ENCODE measurements at regions of chr12 and their contacts with region 1.

Region 1: DNA sequence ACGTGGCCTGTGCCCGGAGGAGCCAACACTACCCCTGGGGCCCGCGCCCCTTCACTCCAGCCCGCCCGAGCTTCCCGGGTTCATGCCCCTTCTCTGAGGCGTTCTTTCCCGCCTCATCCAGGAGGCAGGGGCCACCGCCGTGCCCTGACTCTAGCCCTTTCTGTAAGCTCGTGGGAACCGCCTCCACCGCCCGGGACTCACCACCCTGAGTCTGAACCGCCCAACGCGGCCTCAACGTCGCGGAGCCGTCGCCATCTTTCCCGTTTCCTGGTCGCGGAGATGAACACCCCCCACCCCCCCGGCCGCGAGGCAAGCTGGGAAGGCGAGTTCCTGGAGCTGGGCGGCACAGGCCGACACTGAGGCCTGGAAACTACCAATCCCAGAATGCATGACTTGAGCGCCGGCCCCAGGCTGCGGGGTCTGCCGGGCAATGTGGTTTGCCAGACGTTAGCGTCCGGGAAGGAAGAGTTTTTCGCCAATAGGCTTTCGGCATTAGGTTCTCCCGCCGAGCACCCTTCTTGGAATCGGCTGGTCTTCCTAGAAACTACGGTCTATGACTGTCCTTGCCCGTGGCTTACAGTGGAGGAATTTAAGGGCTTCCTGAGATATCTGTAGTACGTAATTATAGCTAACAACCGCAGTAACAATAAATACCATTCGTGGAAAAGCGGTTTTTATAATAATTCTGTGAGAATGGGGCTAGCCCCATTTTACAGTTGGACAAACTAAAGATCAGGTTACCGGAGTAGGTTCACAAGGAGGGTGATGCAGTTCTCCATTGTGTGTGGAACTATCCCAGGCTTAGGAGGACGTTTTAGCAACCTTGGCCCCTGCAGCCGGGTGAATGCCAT is at the start of gene DDX23:
- DNase-seq: peak; percentile 87 to 94 (median 89)
- H3K4me3 ChIP-seq: peak within 1 kb of the TSS; percentile 87
- H3K4me3 Mint-ChIP-seq: peak within 1 kb of the TSS; percentile 89 to 99 (median 97)
- H3K27ac ChIP-seq: peak within 1 kb of the TSS; percentile 98
- H3K27ac Mint-ChIP-seq: peak within 1 kb of the TSS; percentile 91 to 99 (median 96)
- H3K4me1 ChIP-seq: peaks cover 27% of the 10 kb centered on the region
- H3K4me1 Mint-ChIP-seq: peaks cover 34 to 46% (median 45%) of the 10 kb centered on the region in 3 donors
- H3K27me3 ChIP-seq: no peaks in the 10 kb centered on the region
- H3K27me3 Mint-ChIP-seq: peaks cover 0 to 4% of the 10 kb centered on the region in 2 donors
- total RNA-seq, gene DDX23: 147 to 148 TPM

Region 2: DNA sequence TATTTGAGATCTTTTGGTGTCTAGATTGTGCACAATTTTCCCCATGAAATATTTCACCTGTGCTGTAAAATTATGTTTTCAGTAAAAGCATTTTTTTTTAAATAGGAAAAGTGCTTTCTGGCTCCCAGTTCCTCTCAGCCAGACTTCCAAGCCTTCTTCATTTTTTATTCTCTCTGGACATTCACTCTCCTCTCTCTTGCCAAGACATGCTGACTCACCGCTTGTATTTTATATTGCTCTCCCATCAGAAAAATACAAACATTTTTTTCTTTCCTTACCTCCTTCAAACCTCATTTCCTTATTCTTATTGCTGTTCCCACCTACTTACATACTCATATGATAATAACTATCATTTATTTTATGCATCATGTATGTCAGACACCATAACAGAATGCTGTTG is 463.7 kb before region 1 on chr12:
- CTCF ChIA-PET with region 1: no interaction called
- POLR2A ChIA-PET with region 1: no interaction called
- DNase-seq: no peak
- H3K4me3 ChIP-seq: no peak overlapping the region
- H3K4me3 Mint-ChIP-seq: no peak overlapping the region
- H3K27ac ChIP-seq: no peak overlapping the region
- H3K27ac Mint-ChIP-seq: peak overlapping the region in 1 of 8 donors; percentile 1
- H3K4me1 ChIP-seq: no peaks in the 10 kb centered on the region
- H3K4me1 Mint-ChIP-seq: no peaks in the 10 kb centered on the region
- H3K27me3 ChIP-seq: no peaks in the 10 kb centered on the region
- H3K27me3 Mint-ChIP-seq: peaks cover 27 to 57% of the 10 kb centered on the region in 2 donors

Region 3: DNA sequence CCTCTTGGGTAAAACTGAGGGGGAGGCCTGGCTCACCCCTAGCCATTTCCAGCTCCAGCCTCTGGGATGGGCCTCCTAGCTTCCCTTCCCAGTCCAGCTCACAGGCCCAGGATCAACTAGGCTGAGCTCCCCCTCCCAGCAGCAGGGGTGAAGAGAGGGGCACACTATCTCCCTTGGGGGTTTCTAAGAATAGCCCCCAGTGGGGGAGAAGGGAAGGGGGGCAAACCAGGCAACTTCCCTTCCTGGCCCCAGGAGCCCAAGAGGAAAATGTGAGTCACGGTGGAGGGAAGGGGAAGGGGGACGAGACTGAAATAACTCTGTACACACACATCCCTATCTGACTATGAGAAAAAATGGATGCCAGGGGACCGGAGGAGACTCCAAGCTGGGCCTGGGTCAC is 72.2 kb before region 1 on chr12:
- CTCF ChIA-PET with region 1: no interaction called
- POLR2A ChIA-PET with region 1: no interaction called
- DNase-seq: no peak
- H3K4me3 ChIP-seq: no peak overlapping the region
- H3K4me3 Mint-ChIP-seq: no peak overlapping the region
- H3K27ac ChIP-seq: no peak overlapping the region
- H3K27ac Mint-ChIP-seq: no peak overlapping the region
- H3K4me1 ChIP-seq: no peaks in the 10 kb centered on the region
- H3K4me1 Mint-ChIP-seq: no peaks in the 10 kb centered on the region
- H3K27me3 ChIP-seq: no peaks in the 10 kb centered on the region
- H3K27me3 Mint-ChIP-seq: peaks cover 3 to 21% of the 10 kb centered on the region in 2 donors

Region 4: GRCh38 chr12:48814262-48815125 is 37.6 kb before region 1 on chr12:
- CTCF ChIA-PET with region 1: interaction called, 13 read pairs
- POLR2A ChIA-PET with region 1: interaction called, 5 read pairs
- DNase-seq: peak; percentile 60 to 81 (median 69)
- H3K4me3 ChIP-seq: peak overlapping the region; percentile 84
- H3K4me3 Mint-ChIP-seq: peak overlapping the region; percentile 89 to 98 (median 94)
- H3K27ac ChIP-seq: peak overlapping the region; percentile 67
- H3K27ac Mint-ChIP-seq: peak overlapping the region; percentile 30 to 96 (median 66)
- H3K4me1 ChIP-seq: peaks cover 26% of the 10 kb centered on the region
- H3K4me1 Mint-ChIP-seq: peaks cover 29 to 46% (median 39%) of the 10 kb centered on the region in 3 donors
- H3K27me3 ChIP-seq: no peaks in the 10 kb centered on the region
- H3K27me3 Mint-ChIP-seq: peaks cover 0 to 5% of the 10 kb centered on the region in 2 donors

Region 5: GRCh38 chr12:48890657-48891418 is 38.7 kb after region 1 on chr12:
- CTCF ChIA-PET with region 1: interaction called, 124 read pairs
- POLR2A ChIA-PET with region 1: interaction called, 22 read pairs
- DNase-seq: peak; percentile 57 to 79 (median 64)
- H3K4me3 ChIP-seq: no peak overlapping the region
- H3K4me3 Mint-ChIP-seq: peak overlapping the region in 3 of 7 donors; percentile 18 to 42 (median 39)
- H3K27ac ChIP-seq: no peak overlapping the region
- H3K27ac Mint-ChIP-seq: peak overlapping the region in 2 of 8 donors; percentile 11 to 61
- H3K4me1 ChIP-seq: no peaks in the 10 kb centered on the region
- H3K4me1 Mint-ChIP-seq: peaks cover 6 to 10% (median 8%) of the 10 kb centered on the region in 3 donors
- H3K27me3 ChIP-seq: peaks cover 10% of the 10 kb centered on the region
- H3K27me3 Mint-ChIP-seq: peaks cover 9 to 19% of the 10 kb centered on the region in 2 donors

Region 6: GRCh38 chr12:48917857-48918537 is 65.9 kb after region 1 on chr12:
- CTCF ChIA-PET with region 1: interaction called, 10 read pairs
- POLR2A ChIA-PET with region 1: interaction called, 7 read pairs
- DNase-seq: peak; percentile 16 to 67 (median 47)
- H3K4me3 ChIP-seq: peak overlapping the region; percentile 65
- H3K4me3 Mint-ChIP-seq: peak overlapping the region; percentile 85 to 98 (median 93)
- H3K27ac ChIP-seq: peak overlapping the region; percentile 3
- H3K27ac Mint-ChIP-seq: peak overlapping the region; percentile 91 to 97 (median 94)
- H3K4me1 ChIP-seq: peaks cover 31% of the 10 kb centered on the region
- H3K4me1 Mint-ChIP-seq: peaks cover 41 to 53% (median 46%) of the 10 kb centered on the region in 3 donors
- H3K27me3 ChIP-seq: no peaks in the 10 kb centered on the region
- H3K27me3 Mint-ChIP-seq: no peaks in the 10 kb centered on the region

Region 7: DNA sequence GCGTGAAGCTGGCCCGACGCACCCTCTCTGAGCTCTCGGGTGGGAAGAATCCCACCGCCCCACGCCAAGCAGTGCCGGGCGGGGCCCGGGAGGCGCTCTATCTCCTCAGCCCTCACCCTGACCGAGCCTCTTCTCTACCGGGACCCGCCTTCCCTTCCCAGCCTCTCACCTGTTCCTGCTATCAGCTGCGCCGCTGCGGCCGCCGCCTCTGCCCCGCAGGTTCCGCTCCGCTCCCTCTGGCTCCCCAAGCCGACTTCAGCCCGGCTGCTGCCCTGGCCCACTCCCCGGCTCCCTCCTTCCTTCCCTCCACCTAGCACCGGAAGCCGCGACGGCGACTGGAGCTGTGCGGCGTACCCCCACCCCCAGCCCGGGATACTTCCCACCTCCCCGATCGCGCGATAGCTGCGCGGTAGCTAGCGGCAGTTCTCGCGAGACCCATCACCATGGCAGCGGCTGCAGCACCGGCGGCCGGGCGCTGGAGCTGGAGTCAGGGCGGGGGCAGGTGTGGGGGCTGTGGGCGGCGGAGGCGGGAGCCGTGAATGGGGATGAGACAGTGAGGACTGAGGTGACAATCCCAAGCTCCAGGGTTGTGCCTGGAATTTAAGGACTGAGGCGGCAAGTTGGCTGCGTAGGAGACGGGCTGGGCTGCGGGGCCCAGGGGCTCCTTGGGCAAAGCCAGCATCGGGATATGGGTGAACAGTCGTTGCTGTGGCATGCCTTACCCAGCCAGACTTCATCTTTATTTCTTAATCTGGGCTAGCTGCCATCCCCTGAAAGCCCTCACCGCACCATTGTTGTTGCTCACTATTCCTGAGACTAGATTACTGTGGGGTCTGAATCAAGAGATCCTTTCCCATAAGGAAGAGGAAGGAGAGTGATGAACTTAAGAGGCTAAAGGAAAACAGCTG is 105.3 kb after region 1 on chr12 and contains the start of gene ARF3:
- CTCF ChIA-PET with region 1: interaction called, 10 read pairs
- POLR2A ChIA-PET with region 1: interaction called, 10 read pairs
- DNase-seq: peak; percentile 90 to 96 (median 92)
- H3K4me3 ChIP-seq: peak within 1 kb of the TSS; percentile 83
- H3K4me3 Mint-ChIP-seq: peak within 1 kb of the TSS; percentile 93 to 99 (median 96)
- H3K27ac ChIP-seq: peak within 1 kb of the TSS; percentile 84
- H3K27ac Mint-ChIP-seq: peak within 1 kb of the TSS; percentile 68 to 97 (median 93)
- H3K4me1 ChIP-seq: peaks cover 33% of the 10 kb centered on the region
- H3K4me1 Mint-ChIP-seq: peaks cover 35 to 54% (median 44%) of the 10 kb centered on the region in 3 donors
- H3K27me3 ChIP-seq: no peaks in the 10 kb centered on the region
- H3K27me3 Mint-ChIP-seq: peaks cover 0 to 6% of the 10 kb centered on the region in 2 donors
- total RNA-seq, gene ARF3: 91.5 to 91.8 TPM

Region 8: GRCh38 chr12:48995061-48995879 is 143.2 kb after region 1 on chr12:
- CTCF ChIA-PET with region 1: interaction called, 18 read pairs
- POLR2A ChIA-PET with region 1: no interaction called
- DNase-seq: peak in 4 of 5 donors; percentile 27 to 68 (median 38)
- H3K4me3 ChIP-seq: no peak overlapping the region
- H3K4me3 Mint-ChIP-seq: peak overlapping the region; percentile 12 to 66 (median 45)
- H3K27ac ChIP-seq: no peak overlapping the region
- H3K27ac Mint-ChIP-seq: peak overlapping the region in 7 of 8 donors; percentile 43 to 97 (median 92)
- H3K4me1 ChIP-seq: peaks cover 33% of the 10 kb centered on the region
- H3K4me1 Mint-ChIP-seq: peaks cover 27 to 46% (median 31%) of the 10 kb centered on the region in 3 donors
- H3K27me3 ChIP-seq: peaks cover 26% of the 10 kb centered on the region
- H3K27me3 Mint-ChIP-seq: peaks cover 47 to 51% of the 10 kb centered on the region in 2 donors

Region 9: DNA sequence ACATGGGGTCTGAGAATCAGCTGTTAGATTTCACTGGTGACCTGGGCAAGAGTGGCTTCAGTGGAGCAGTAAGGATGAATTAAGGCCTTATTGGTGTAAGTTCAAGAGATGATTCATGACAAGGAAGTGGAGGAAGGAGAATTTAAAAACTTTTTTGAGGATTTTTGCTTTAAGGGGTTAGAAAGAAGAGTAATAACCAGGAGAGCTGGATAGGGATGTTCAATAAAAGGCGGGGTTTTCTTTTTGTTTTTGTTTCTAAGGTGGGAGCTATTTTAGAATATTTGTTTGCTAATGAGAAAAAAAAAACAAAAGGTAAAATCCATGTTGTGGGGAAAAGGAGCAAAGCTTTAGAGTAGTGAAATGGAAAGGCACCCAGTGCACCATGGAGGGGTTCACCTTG is 294.3 kb after region 1 on chr12:
- CTCF ChIA-PET with region 1: no interaction called
- POLR2A ChIA-PET with region 1: no interaction called
- DNase-seq: no peak
- H3K4me3 ChIP-seq: no peak overlapping the region
- H3K4me3 Mint-ChIP-seq: no peak overlapping the region
- H3K27ac ChIP-seq: no peak overlapping the region
- H3K27ac Mint-ChIP-seq: no peak overlapping the region
- H3K4me1 ChIP-seq: no peaks in the 10 kb centered on the region
- H3K4me1 Mint-ChIP-seq: peaks cover 0 to 4% (median 2%) of the 10 kb centered on the region in 3 donors
- H3K27me3 ChIP-seq: no peaks in the 10 kb centered on the region
- H3K27me3 Mint-ChIP-seq: no peaks in the 10 kb centered on the region

Measured in CD8-positive, alpha-beta memory T cell (primary cell).